H1 (cell line): ENCODE measurements at regions of chr6 and their contacts with region 1.

Region 1: DNA sequence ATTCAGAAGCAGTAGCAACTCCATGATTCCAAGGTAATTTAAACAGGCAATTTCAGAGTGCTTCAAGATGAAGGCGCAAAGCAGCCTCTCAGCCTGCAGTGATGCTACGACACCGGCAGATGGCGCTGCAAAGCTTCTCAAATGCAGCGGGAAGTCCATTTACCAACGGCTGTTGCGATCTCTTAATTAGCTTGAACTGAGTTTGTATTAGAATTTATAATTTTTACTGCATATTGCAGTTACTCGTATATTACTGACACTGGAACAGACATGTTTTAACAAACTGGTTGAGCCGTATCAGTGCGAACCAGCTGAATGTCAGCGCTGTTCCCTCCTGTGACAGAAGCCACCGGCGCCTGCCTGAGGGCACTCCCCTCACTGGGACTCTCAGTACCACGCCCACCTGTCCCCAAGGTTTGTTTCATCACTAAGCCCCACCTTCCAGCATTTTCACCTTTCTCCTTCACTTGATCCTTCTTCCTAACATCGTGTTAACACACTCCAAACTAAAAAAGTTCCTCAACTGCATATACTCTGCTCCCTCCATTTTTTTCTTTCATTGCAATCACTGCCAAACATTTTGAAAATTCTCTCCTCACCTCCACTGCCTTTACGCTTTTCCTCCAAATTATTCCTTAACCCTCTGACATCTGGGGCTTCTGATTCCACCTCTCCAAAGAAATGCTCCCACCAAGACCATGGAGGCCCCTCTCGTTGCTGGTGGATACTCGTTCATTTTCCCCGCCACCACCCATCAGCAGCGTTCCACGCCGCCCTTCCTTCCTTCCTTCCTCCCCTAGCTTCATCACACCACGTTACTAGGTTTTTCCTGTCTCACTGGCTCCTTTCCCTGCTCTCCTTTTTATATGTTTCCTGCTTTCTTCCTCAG is 14.5 kb downstream of the GNL1 start:
- DNase-seq: peak; percentile 57 to 87
- H3K4me3 ChIP-seq: peak overlapping the region; percentile 13 to 59 (median 45); a peak in 7 of 8 replicates
- H3K27ac ChIP-seq: no peak overlapping the region
- H3K4me1 ChIP-seq: no peaks in the 10 kb centered on the region
- H3K27me3 ChIP-seq: no peaks in the 10 kb centered on the region
- CTCF ChIP-seq: peak; percentile 87 to 97 (median 91)
- EP300 ChIP-seq: no peak
- POLR2A ChIP-seq: peak in 1 of 2 experiments; percentile 33; a peak in 1 of 3 replicates
- RAD21 ChIP-seq: peak; percentile 52 to 65

Region 2: GRCh38 chr6:30405934-30406333 is 135.8 kb before region 1 on chr6:
- CTCF ChIA-PET with region 1: no interaction called
- POLR2A ChIA-PET with region 1: no interaction called
- DNase-seq: no peak
- H3K4me3 ChIP-seq: no peak overlapping the region
- H3K27ac ChIP-seq: no peak overlapping the region
- H3K4me1 ChIP-seq: no peaks in the 10 kb centered on the region
- H3K27me3 ChIP-seq: peaks cover 0 to 2% (median 0%) of the 10 kb centered on the region in 4 experiments; a peak in 2 of 7 replicates
- CTCF ChIP-seq: no peak
- EP300 ChIP-seq: no peak
- POLR2A ChIP-seq: no peak
- RAD21 ChIP-seq: no peak

Region 3: GRCh38 chr6:30483677-30484279 is 58.0 kb before region 1 on chr6:
- CTCF ChIA-PET with region 1: interaction called, 326 read pairs
- POLR2A ChIA-PET with region 1: interaction called, 3 read pairs
- DNase-seq: no peak
- H3K4me3 ChIP-seq: no peak overlapping the region
- H3K27ac ChIP-seq: no peak overlapping the region
- H3K4me1 ChIP-seq: peaks cover 0 to 2% (median 0%) of the 10 kb centered on the region in 4 experiments; a peak in 3 of 7 replicates
- H3K27me3 ChIP-seq: peaks cover 7 to 23% (median 17%) of the 10 kb centered on the region in 4 experiments; a peak in 6 of 7 replicates
- CTCF ChIP-seq: peak in 2 of 3 experiments; percentile 49 to 63; a peak in 3 of 4 replicates
- EP300 ChIP-seq: no peak
- POLR2A ChIP-seq: no peak
- RAD21 ChIP-seq: peak; percentile 68 to 75

Region 4: GRCh38 chr6:30500421-30501355 is 41.1 kb before region 1 on chr6:
- CTCF ChIA-PET with region 1: interaction called, 19 read pairs
- POLR2A ChIA-PET with region 1: interaction called, 3 read pairs
- DNase-seq: no peak
- H3K4me3 ChIP-seq: no peak overlapping the region
- H3K27ac ChIP-seq: no peak overlapping the region
- H3K4me1 ChIP-seq: no peaks in the 10 kb centered on the region; a peak in 1 of 7 replicates
- H3K27me3 ChIP-seq: no peaks in the 10 kb centered on the region
- CTCF ChIP-seq: no peak
- EP300 ChIP-seq: no peak
- POLR2A ChIP-seq: no peak
- RAD21 ChIP-seq: no peak

Region 5: DNA sequence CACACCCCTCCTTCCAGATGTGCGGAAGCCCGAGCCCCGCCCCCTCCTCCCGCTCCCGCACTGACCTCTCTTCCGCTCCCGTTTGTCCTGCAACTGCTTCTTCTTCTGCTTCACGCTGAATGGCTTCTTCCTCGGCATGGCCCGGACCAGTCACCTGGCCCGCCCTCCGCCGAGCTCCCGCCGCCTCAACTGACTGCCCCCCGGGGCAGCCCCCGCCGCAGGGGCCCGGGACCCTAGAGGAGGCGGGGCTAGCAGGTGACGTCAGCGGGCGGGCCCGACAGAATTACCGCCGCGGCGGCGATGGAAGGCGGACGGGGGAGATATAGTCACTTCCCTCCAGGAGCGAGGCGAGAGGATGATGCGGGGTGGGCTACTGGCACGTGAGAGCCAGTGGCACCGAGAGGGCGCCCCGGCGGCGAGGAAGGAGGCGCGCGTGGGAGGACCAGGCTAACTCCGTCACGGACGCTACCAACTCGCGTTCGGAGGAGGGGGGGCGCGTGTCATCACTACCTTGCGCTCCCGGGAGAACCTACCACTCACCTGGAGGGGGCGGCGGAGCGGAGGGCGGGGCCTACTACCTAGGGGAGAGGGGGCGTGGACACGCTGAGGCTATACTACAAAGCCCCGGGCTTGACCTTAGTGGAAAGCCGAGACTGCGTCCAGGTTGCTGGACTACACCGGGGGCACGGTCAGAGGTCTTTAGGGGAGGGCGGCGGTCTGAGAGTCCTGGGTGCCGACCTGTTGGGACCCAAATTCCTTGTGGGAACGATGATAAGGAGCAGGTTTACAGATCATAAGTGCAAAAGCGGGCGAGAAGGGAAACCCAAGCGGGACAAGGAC is 14.5 kb after region 1 on chr6 and contains the start of gene GNL1:
- CTCF ChIA-PET with region 1: interaction called, 76 read pairs
- POLR2A ChIA-PET with region 1: interaction called, 47 read pairs
- DNase-seq: peak; percentile 90 to 98
- H3K4me3 ChIP-seq: peak within 1 kb of the TSS; percentile 76 to 91 (median 89)
- H3K27ac ChIP-seq: peak within 1 kb of the TSS; percentile 93
- H3K4me1 ChIP-seq: peaks cover 0 to 3% (median 1%) of the 10 kb centered on the region in 4 experiments; a peak in 1 of 7 replicates
- H3K27me3 ChIP-seq: no peaks in the 10 kb centered on the region
- CTCF ChIP-seq: no peak
- EP300 ChIP-seq: peak in 1 of 2 experiments; percentile 99; a peak in 2 of 3 replicates
- POLR2A ChIP-seq: no peak
- RAD21 ChIP-seq: no peak
- total RNA-seq, gene GNL1: 67.8 and 75.4 TPM in 2 replicates

Region 6: DNA sequence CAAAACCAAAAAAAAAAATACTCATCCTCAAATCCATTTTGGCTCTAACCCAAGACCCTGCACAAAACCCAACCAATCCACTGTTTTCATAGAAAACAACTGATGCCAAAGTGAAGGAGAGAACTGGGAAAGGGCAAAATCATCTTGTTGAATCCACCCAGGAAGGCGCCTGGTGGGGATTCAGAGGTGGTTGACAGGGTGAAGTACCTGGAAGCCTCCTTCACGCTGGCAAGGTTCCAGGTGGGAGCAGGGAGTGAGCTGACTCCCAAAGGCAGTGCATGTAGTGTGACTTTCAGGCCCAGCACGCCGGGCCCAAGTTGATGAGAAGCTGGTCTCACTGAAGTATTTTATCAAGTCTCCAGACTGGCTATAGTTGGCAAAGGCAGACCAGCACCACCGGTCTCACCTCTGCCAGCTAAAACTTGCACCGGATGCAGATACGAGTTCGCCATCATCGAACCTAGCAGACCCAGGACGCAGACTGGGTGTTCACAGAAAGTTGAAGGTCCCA is 58.7 kb after region 1 on chr6:
- CTCF ChIA-PET with region 1: interaction called, 37 read pairs
- POLR2A ChIA-PET with region 1: interaction called, 12 read pairs
- DNase-seq: no peak
- H3K4me3 ChIP-seq: no peak overlapping the region
- H3K27ac ChIP-seq: no peak overlapping the region
- H3K4me1 ChIP-seq: no peaks in the 10 kb centered on the region
- H3K27me3 ChIP-seq: no peaks in the 10 kb centered on the region
- CTCF ChIP-seq: no peak
- EP300 ChIP-seq: no peak
- POLR2A ChIP-seq: no peak
- RAD21 ChIP-seq: no peak